ENCODE measurements at regions of chr20 and their contacts with region 1.

Region 1: GRCh38 chr20:25042531-25043498 is 15.1 kb downstream of the ACSS1 start:
- DNase-seq: no peak
- H3K4me3 ChIP-seq: no peak overlapping the region
- H3K27ac ChIP-seq: peak overlapping the region; percentile 83 to 92 (median 88)
- H3K4me1 ChIP-seq: peaks cover 92 to 98% (median 98%) of the 10 kb centered on the region in 4 donors
- H3K27me3 ChIP-seq: no peaks in the 10 kb centered on the region
- CTCF ChIP-seq: no peak
- EP300 ChIP-seq: no peak
- POLR2A ChIP-seq: no peak

Region 2: DNA sequence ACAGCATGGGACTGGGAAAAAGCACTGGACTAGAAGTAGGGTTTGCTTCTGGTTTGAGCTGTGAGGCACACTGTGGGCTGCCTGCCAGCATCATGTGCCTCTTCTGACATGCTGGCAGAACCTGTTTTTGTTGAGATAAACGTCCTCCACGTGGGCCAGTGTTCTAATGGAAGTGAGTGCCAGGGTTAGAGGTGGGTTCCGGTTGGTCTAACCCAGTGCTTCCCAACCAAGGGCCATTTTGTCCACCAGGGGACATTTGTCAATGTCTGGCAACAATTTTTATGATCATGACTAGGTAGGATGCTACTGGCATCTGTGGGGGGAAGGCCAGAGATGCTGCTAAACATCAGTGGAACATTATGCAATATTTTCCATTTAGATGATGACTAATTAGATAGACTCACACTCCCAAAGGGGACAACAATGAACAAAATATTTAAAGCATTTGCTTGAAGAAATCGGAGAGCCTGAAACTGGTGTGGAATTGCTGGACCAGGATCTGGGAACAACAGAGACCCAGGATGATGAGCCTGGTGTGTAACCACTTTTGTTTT is 42.5 kb before region 1 on chr20:
- intact Hi-C with region 1: loop called (anchors 5 kb)
- DNase-seq: no peak
- H3K4me3 ChIP-seq: no peak overlapping the region
- H3K27ac ChIP-seq: peak overlapping the region in 3 of 4 donors; percentile 42 to 61 (median 51)
- H3K4me1 ChIP-seq: peaks cover 29 to 52% (median 45%) of the 10 kb centered on the region in 4 donors
- H3K27me3 ChIP-seq: no peaks in the 10 kb centered on the region
- CTCF ChIP-seq: peak in 1 of 3 experiments; percentile 16
- EP300 ChIP-seq: no peak
- POLR2A ChIP-seq: no peak

Region 3: GRCh38 chr20:25116739-25117458 is 74.1 kb after region 1 on chr20:
- intact Hi-C with region 1: no loop called
- DNase-seq: peak; percentile 47
- H3K4me3 ChIP-seq: no peak overlapping the region
- H3K27ac ChIP-seq: no peak overlapping the region
- H3K4me1 ChIP-seq: peaks cover 3 to 14% (median 10%) of the 10 kb centered on the region in 4 donors
- H3K27me3 ChIP-seq: peaks cover 0 to 8% (median 0%) of the 10 kb centered on the region in 4 donors
- CTCF ChIP-seq: no peak
- EP300 ChIP-seq: no peak
- POLR2A ChIP-seq: no peak